ENCODE measurements at regions of chr3 and their contacts with region 1.

Region 1: DNA sequence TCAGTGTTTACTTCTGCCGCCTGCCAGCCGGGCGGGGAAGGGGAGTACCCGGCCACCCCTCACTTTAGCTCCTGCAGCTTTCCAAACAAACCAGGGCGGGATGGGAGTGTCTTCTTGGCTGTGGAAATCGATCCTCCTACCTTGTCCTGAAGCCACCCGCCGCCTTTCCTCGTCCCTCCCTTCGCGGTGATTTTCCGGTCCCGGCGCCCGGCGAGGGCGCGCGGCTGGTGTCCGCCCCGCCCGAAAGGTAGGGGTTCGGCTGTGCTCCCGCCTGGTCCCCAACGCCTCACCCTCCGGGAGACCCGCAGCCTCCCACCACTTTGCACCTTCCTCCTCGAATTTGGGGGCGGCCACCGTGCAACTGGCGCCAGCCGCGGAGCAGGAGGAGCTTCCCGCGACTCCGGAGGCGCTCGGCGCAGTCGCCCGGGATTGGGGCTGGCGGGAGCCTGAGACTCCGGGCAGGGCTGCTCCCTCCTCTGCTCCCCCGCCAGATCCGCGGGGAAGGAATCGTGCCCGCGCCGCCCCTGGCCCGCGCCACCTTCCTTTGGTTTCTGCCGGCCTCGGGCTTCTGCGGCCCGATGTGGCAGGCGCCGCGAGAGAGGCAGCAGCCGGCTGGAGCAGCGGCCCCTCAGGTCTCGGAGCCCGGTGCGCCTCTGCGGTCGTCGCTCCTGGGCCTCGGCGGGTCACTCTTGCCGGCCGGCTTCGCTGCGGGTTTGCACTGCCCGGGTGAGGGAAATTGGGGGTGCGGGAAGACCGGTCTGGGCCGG is 30.7 kb upstream of the ST3GAL6 start:
- DNase-seq: peak; percentile 68 to 73
- H3K4me3 ChIP-seq: peak overlapping the region; percentile 63 to 86 (median 84)
- H3K27ac ChIP-seq: peak overlapping the region; percentile 61 to 92 (median 92)
- H3K4me1 ChIP-seq: peaks cover 0 to 4% of the 10 kb centered on the region in 2 donors
- H3K27me3 ChIP-seq: no peaks in the 10 kb centered on the region
- CTCF ChIP-seq: no peak
- POLR2A ChIP-seq: peak in 1 of 2 donors; percentile 84

Region 2: GRCh38 chr3:98460220-98460619 is 272.2 kb before region 1 on chr3:
- intact Hi-C with region 1: no loop called
- DNase-seq: no peak
- H3K4me3 ChIP-seq: no peak overlapping the region
- H3K27ac ChIP-seq: no peak overlapping the region
- H3K4me1 ChIP-seq: no peaks in the 10 kb centered on the region
- H3K27me3 ChIP-seq: no peaks in the 10 kb centered on the region
- CTCF ChIP-seq: no peak
- POLR2A ChIP-seq: no peak

Region 3: DNA sequence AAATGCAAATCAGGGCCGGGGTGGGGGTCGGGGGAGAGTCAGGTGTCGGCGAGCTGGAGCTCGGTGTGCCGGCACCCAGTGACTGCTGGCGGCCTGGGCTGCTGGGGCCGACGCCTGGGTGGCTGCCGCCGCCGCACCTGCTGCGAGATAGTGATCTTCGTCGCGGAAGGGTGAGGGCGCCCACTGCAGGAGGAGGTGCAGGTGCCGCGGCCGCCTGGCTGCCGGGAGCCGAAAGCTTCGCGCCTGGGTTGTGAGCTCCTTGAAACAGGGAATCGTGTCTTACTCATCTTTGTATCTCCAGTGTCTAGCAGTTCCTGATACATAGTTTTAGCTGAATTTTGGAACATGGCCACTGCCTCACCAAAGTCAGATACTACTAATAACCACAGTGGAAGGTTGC is 75.0 kb before region 1 on chr3:
- intact Hi-C with region 1: no loop called
- DNase-seq: peak; percentile 44 to 56
- H3K4me3 ChIP-seq: no peak overlapping the region
- H3K27ac ChIP-seq: no peak overlapping the region
- H3K4me1 ChIP-seq: no peaks in the 10 kb centered on the region
- H3K27me3 ChIP-seq: no peaks in the 10 kb centered on the region
- CTCF ChIP-seq: peak in 2 of 6 experiments; percentile 31 to 47
- POLR2A ChIP-seq: no peak

Region 4: GRCh38 chr3:98784666-98785600 is 52.5 kb after region 1 on chr3:
- intact Hi-C with region 1: loop called (anchors 10 kb)
- DNase-seq: no peak
- H3K4me3 ChIP-seq: no peak overlapping the region
- H3K27ac ChIP-seq: no peak overlapping the region
- H3K4me1 ChIP-seq: peaks cover 4 to 28% of the 10 kb centered on the region in 2 donors
- H3K27me3 ChIP-seq: no peaks in the 10 kb centered on the region
- CTCF ChIP-seq: no peak
- POLR2A ChIP-seq: no peak

Region 5: GRCh38 chr3:98980915-98981596 is 248.6 kb after region 1 on chr3:
- intact Hi-C with region 1: no loop called
- DNase-seq: no peak
- H3K4me3 ChIP-seq: no peak overlapping the region
- H3K27ac ChIP-seq: no peak overlapping the region
- H3K4me1 ChIP-seq: no peaks in the 10 kb centered on the region
- H3K27me3 ChIP-seq: no peaks in the 10 kb centered on the region
- CTCF ChIP-seq: no peak
- POLR2A ChIP-seq: no peak